ENCODE measurements at regions of chr17 and their contacts with region 1.

Region 1: GRCh38 chr17:40287494-40288369 is at the start of gene CDC6:
- H3K4me3 Mint-ChIP-seq: peak within 1 kb of the TSS; percentile 98
- H3K27ac Mint-ChIP-seq: peak within 1 kb of the TSS; percentile 63
- H3K4me1 Mint-ChIP-seq: peaks cover 9% of the 10 kb centered on the region
- H3K27me3 Mint-ChIP-seq: no peaks in the 10 kb centered on the region

Region 2: GRCh38 chr17:40203131-40203530 is 84.6 kb before region 1 on chr17:
- intact Hi-C with region 1: loop called (anchors 1 kb)
- H3K4me3 Mint-ChIP-seq: no peak overlapping the region
- H3K27ac Mint-ChIP-seq: no peak overlapping the region
- H3K4me1 Mint-ChIP-seq: peaks cover 12% of the 10 kb centered on the region
- H3K27me3 Mint-ChIP-seq: peaks cover 12% of the 10 kb centered on the region

Region 3: GRCh38 chr17:40219073-40219860 is 68.5 kb before region 1 on chr17 and contains the start of gene WIPF2:
- intact Hi-C with region 1: loop called (anchors 1 kb)
- H3K4me3 Mint-ChIP-seq: peak within 1 kb of the TSS; percentile 94
- H3K27ac Mint-ChIP-seq: peak within 1 kb of the TSS; percentile 95
- H3K4me1 Mint-ChIP-seq: peaks cover 40% of the 10 kb centered on the region
- H3K27me3 Mint-ChIP-seq: no peaks in the 10 kb centered on the region

Measured in dendritic cell treated with granulocyte-macrophage colony-stimulating factor and Interleukin-4, amounts not matched to agents 40 ng/mL and 50 ng/mL, for 4 days (primary cell).